Endothelial cell of umbilical vein (primary cell): ENCODE measurements at regions of chr12 and their contacts with region 1.

Region 1: GRCh38 chr12:57175428-57176138 is 28.2 kb upstream of the LRP1-AS start:
- DNase-seq: peak; percentile 24
- H3K4me3 ChIP-seq: no peak overlapping the region
- H3K27ac ChIP-seq: no peak overlapping the region
- H3K4me1 ChIP-seq: no peaks in the 10 kb centered on the region
- H3K27me3 ChIP-seq: no peaks in the 10 kb centered on the region
- CTCF ChIP-seq: peak; percentile 68 to 76
- POLR2A ChIP-seq: no peak

Region 2: DNA sequence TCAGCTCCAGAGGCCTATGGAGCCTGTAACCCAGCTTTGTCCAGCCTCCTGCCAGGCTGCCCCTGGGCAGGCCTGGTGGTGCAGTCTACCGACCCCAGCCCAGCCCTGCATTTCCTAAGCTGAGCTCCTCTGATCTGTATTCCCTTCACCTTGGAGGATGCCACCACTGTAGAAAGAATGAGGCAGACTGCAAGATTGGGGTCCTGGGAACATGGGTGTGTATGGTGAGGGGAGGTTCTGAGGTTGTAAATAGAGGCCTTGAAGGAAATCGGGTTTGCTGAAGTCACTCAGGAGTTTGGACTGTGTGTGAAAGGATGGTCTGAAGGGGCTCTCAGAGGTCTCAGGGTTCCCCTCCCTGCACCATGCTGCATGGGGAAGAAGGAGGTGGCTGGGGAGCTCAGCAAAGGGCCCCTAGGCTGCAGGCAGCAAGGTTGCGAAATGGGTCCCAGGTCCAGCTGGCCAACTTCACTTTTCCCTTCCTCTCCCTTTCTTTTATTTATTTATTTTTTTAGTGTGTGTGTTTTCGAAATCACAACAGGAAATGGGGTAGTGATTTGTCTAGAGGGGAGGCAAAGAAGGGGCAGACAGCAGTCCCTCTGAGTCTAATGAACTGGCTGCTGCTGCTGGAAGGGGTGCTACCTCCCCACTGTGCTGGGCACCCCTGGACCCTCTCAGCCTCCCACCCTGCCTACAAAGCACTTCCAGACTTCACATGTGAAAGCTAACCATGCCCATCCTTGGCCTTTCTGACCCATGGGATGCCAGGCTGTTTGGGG is 26.9 kb before region 1 on chr12:
- CTCF ChIA-PET with region 1: interaction called, 38 read pairs
- POLR2A ChIA-PET with region 1: no interaction called
- dilution Hi-C with region 1: no loop called
- intact Hi-C with region 1: no loop called
- DNase-seq: no peak
- H3K4me3 ChIP-seq: no peak overlapping the region
- H3K27ac ChIP-seq: no peak overlapping the region
- H3K4me1 ChIP-seq: peaks cover 2% of the 10 kb centered on the region
- H3K27me3 ChIP-seq: no peaks in the 10 kb centered on the region
- CTCF ChIP-seq: no peak
- POLR2A ChIP-seq: no peak

Region 3: DNA sequence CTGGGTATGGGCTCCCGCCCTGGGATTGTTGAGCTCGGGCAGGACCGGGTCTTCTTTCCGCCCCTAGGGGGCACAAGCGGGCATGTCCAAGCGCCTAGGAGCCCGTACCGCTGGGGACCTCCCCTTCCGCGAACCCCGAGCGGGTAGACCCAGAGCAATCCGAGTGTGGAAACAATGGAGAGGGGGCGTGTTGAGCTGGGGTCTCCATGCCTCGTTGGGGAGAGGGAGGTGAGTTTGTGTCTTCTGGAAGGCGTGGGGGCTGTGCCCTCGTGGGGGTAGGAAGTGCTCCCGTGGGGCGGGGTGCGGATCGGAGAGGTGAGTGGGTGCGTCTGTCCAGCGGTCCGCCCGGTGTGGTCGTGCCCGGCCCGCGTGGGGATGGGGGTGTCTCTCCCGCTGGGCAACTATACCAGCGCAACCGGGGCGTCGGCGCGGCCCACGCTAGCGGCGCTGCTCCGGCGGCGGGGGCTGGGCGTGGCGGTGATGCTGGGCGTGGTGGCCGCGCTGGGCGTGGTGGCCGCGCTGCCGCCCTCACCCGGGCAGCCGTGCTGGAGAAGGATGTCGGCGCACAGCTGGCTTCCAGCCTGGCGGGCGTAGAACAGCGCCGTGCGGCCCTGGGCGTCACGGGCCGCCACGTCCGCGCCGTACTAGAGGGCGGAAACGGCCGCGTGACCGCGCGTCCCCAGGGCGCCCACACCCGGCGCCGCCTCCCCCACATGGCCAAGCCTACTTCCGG is 550.7 kb after region 1 on chr12:
- CTCF ChIA-PET with region 1: no interaction called
- POLR2A ChIA-PET with region 1: no interaction called
- dilution Hi-C with region 1: no loop called
- intact Hi-C with region 1: no loop called
- DNase-seq: peak; percentile 74
- H3K4me3 ChIP-seq: peak overlapping the region; percentile 62 to 64 (median 62)
- H3K27ac ChIP-seq: peak overlapping the region; percentile 23
- H3K4me1 ChIP-seq: peaks cover 7% of the 10 kb centered on the region
- H3K27me3 ChIP-seq: peaks cover 2 to 8% of the 10 kb centered on the region in 2 experiments
- CTCF ChIP-seq: peak; percentile 88 to 97
- POLR2A ChIP-seq: peak; percentile 79